ENCODE measurements at regions of chr1 and their contacts with region 1.

Region 1: DNA sequence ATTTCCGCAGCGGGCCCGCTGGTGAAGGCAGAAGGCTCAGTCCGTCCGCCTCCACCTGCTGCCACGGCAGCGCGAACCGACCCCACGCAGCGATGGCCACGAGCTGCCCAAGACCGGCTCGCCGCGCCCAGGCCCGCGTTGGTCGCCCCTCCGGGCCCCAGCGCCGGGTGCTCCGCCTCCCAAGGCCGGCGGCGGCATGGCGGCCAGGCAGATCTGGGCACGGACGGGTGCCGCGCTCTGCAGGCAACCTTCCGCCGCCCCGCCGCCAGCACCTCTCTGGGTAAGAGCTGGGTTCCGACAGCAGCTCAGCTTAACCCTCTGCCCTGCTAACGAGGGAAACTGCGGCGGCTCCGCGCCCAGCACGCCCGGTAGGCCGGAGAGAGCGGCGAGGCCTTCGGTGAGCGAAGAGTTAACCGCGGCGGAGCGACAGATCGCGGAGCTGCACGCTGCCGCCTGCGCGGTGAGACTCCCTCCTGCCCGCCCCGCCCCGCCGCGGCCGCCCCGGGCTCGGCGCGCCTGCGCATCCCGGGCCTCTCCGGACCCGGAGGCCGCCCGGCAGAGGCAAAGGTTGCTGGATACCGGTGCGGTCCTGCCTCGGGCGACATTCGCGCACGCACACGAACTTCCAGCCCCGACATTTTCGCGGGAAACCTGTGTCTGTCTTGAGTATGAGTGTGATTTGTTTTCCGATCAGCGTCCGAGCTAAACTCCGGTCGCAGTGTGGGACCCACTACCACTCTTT is at the start of gene C1orf53:
- DNase-seq: peak; percentile 35 to 86 (median 66)
- ATAC-seq: peak; percentile 89
- H3K4me3 ChIP-seq: peak within 1 kb of the TSS; percentile 66 to 75
- H3K4me3 Mint-ChIP-seq: peak within 1 kb of the TSS; percentile 97
- H3K27ac ChIP-seq: peak within 1 kb of the TSS; percentile 40 to 49
- H3K27ac Mint-ChIP-seq: peak within 1 kb of the TSS; percentile 76
- H3K4me1 ChIP-seq: peaks cover 13% of the 10 kb centered on the region
- H3K4me1 Mint-ChIP-seq: peaks cover 12% of the 10 kb centered on the region
- H3K27me3 ChIP-seq: peaks cover 11 to 16% of the 10 kb centered on the region in 2 experiments
- H3K27me3 Mint-ChIP-seq: peaks cover 51% of the 10 kb centered on the region
- CTCF ChIP-seq: no peak
- total RNA-seq, gene C1orf53: not detected

Region 2: GRCh38 chr1:196277860-196278259 is 1624.8 kb before region 1 on chr1:
- CTCF ChIA-PET with region 1: no interaction called
- POLR2A ChIA-PET with region 1: no interaction called
- intact Hi-C with region 1: no loop called
- DNase-seq: no peak
- ATAC-seq: no peak
- H3K4me3 ChIP-seq: no peak overlapping the region
- H3K4me3 Mint-ChIP-seq: no peak overlapping the region
- H3K27ac ChIP-seq: no peak overlapping the region
- H3K27ac Mint-ChIP-seq: no peak overlapping the region
- H3K4me1 ChIP-seq: no peaks in the 10 kb centered on the region
- H3K4me1 Mint-ChIP-seq: no peaks in the 10 kb centered on the region
- H3K27me3 ChIP-seq: no peaks in the 10 kb centered on the region
- H3K27me3 Mint-ChIP-seq: no peaks in the 10 kb centered on the region
- CTCF ChIP-seq: no peak

Region 3: DNA sequence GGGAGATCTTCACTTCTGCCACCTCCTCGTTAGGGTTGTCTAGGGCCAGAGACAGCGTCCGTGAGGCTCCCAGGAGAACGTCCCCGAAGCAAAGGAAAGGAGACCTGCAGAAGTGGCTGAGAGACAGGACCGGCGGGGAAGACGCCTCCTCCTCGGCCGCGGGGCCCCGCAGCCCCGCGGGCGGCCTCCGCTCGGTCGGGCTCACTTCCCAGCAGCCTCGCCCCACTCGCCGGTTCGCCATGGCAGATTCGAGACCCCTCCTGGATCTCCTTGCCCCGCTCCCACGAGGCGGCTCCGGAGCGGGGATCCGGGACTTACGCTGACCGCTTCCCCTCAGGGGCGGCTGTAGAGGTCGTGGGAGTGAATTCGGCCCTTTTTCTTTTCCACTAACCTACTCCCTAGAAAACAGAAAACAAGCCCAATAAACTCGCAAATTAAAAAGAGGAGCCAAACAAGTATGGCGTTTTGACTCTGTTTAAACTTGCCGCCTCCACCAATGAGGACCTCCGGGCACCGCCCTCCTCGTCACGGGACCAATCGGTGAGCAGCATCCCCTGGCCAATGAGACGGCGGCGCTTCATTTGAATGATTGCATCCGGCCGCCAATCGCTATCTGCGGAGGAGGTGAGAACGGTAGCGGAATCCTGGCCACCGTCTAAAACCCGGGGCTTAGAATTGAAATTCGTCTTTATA is 756.3 kb before region 1 on chr1 and contains the start of gene ASPM:
- CTCF ChIA-PET with region 1: no interaction called
- POLR2A ChIA-PET with region 1: no interaction called
- intact Hi-C with region 1: loop called in 1 of 2 experiments (anchors 5 kb)
- DNase-seq: peak; percentile 91 to 98 (median 92)
- ATAC-seq: peak; percentile 98
- H3K4me3 ChIP-seq: peak within 1 kb of the TSS; percentile 73 to 78
- H3K4me3 Mint-ChIP-seq: peak within 1 kb of the TSS; percentile 94
- H3K27ac ChIP-seq: peak within 1 kb of the TSS; percentile 29 to 68
- H3K27ac Mint-ChIP-seq: peak within 1 kb of the TSS; percentile 93
- H3K4me1 ChIP-seq: no peaks in the 10 kb centered on the region
- H3K4me1 Mint-ChIP-seq: peaks cover 15% of the 10 kb centered on the region
- H3K27me3 ChIP-seq: peaks cover 0 to 3% of the 10 kb centered on the region in 2 experiments
- H3K27me3 Mint-ChIP-seq: peaks cover 12% of the 10 kb centered on the region
- CTCF ChIP-seq: no peak
- total RNA-seq, gene ASPM: 0.14 to 0.30 TPM

Region 4: DNA sequence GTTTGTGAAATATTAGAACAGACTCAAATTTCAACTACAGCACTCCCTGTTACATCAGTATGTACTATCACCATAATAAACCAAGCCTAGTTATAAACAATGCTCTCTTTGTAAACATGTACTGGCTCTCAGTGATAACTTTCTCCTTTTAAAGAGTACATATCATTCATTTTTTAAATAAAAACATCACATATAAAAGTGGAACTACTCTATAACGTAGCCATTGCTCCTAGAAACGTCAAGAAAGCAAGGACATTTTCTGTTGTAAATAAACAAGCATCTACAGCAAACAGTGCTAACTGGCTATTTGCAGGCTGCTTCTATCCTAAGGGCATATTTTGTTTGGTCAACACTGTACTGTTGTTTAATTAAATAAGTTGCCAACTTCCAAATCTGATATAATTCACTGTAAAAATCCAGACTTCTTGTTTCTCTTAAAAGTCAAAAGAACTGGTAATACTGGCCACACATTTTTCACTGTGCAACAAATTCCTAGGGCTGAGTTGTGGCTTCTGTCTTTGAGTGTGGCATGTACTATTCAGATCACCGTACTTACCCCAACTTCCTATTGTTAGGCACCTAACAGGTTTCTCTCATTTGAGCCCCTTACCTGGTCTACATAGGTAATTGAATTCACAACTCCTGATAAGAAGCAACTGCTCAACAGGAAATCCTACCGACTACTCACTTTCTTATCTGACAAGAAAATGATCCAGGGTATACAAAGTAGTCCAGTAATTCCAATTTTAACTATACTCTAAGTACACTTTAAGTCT is 239.3 kb before region 1 on chr1:
- CTCF ChIA-PET with region 1: no interaction called
- POLR2A ChIA-PET with region 1: no interaction called
- intact Hi-C with region 1: no loop called
- DNase-seq: no peak
- ATAC-seq: no peak
- H3K4me3 ChIP-seq: no peak overlapping the region
- H3K4me3 Mint-ChIP-seq: no peak overlapping the region
- H3K27ac ChIP-seq: no peak overlapping the region
- H3K27ac Mint-ChIP-seq: no peak overlapping the region
- H3K4me1 ChIP-seq: peaks cover 8% of the 10 kb centered on the region
- H3K4me1 Mint-ChIP-seq: peaks cover 20% of the 10 kb centered on the region
- H3K27me3 ChIP-seq: no peaks in the 10 kb centered on the region
- H3K27me3 Mint-ChIP-seq: no peaks in the 10 kb centered on the region
- CTCF ChIP-seq: no peak

Region 5: DNA sequence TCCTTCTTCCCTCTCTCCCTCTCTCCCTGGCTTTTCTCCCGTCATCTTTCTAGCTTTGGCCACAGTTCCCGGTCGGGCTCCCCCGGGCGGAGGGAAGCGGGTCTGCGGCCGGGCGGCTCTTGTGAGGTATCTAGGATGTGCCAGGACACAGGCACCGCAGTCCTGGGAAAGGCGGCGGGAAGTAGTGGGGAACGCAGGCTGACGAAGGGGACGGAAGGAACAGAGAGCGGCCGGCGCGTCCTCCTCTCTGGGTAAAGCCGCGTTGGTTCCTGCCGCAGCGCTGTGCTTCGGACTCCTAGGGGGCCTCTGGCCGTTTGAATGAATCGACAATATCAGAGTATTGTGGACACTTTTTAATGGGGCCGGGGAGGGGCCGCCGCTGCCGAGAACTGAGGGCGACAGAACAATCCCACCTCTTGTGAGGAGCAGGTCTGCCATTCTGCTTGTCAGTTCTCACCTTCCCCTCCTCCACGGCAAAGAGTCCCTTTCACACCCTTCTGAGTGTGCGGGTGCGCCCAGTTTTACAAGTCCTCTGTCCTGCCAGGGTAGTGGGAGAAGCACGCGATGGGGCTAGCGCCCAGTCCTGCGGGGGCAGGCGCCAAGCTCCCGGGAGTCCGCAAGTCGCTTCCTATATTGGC is 13.4 kb after region 1 on chr1:
- CTCF ChIA-PET with region 1: interaction called, 16 read pairs
- POLR2A ChIA-PET with region 1: interaction called, 12 read pairs
- intact Hi-C with region 1: loop called (anchors 1 to 2 kb)
- DNase-seq: peak in 1 of 9 experiments; percentile 34
- ATAC-seq: no peak
- H3K4me3 ChIP-seq: peak overlapping the region in 1 of 2 experiments; percentile 15
- H3K4me3 Mint-ChIP-seq: peak overlapping the region; percentile 29
- H3K27ac ChIP-seq: no peak overlapping the region
- H3K27ac Mint-ChIP-seq: no peak overlapping the region
- H3K4me1 ChIP-seq: peaks cover 79% of the 10 kb centered on the region
- H3K4me1 Mint-ChIP-seq: peaks cover 87% of the 10 kb centered on the region
- H3K27me3 ChIP-seq: peaks cover 84 to 88% of the 10 kb centered on the region in 2 experiments
- H3K27me3 Mint-ChIP-seq: peaks cover 96% of the 10 kb centered on the region
- CTCF ChIP-seq: no peak

Measured in CD8-positive, alpha-beta T cell (primary cell).